Tibial artery (tissue), 4 donors: ENCODE measurements at regions of chr17 and their contacts with region 1.

Region 1: GRCh38 chr17:19648475-19649406 is at the start of gene ALDH3A2:
- DNase-seq: peak; percentile 98 to 99
- H3K4me3 ChIP-seq: peak within 1 kb of the TSS; percentile 69 to 83
- H3K27ac ChIP-seq: peak within 1 kb of the TSS; percentile 90 to 99
- H3K4me1 ChIP-seq: peaks cover 0 to 68% (median 53%) of the 10 kb centered on the region in 4 donors
- H3K27me3 ChIP-seq: no peaks in the 10 kb centered on the region
- CTCF ChIP-seq: peak; percentile 9 to 13

Region 2: GRCh38 chr17:19362277-19363113 is 286.2 kb before region 1 on chr17 and contains the start of gene B9D1:
- intact Hi-C with region 1: no loop called
- DNase-seq: peak; percentile 89 to 97
- H3K4me3 ChIP-seq: peak within 1 kb of the TSS; percentile 64 to 92
- H3K27ac ChIP-seq: peak within 1 kb of the TSS; percentile 85 to 95
- H3K4me1 ChIP-seq: peaks cover 0 to 23% (median 11%) of the 10 kb centered on the region in 4 donors
- H3K27me3 ChIP-seq: no peaks in the 10 kb centered on the region
- CTCF ChIP-seq: peak; percentile 95 to 99

Region 3: DNA sequence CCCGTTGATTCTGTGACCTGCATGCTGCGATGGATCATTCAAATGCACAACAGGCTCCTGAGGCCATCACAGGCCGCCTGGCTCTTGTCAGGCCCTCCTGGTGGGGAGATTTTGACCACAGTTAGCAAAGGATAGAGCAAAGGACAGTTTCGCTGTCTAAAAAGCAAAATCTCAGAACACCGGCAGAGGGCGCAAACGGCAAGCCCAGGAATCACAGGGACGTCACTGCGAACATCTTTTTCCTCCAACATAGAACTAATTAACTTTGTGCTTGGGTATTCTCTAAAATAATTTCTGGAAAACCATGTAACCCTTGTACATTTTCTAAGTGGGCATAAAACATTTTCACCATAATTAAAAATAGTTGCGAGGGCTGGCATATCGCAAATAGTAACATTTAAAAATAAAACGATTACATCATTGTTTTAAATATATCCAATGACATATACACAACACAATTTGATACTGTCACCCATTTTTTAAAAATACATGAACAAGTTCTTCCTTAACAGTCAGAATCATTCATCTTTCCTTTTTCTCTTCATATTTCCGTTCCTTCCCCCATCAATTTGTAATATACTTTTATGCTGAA is 134.7 kb before region 1 on chr17:
- intact Hi-C with region 1: loop called (anchors 5 kb)
- DNase-seq: peak; percentile 62 to 81
- H3K4me3 ChIP-seq: peak overlapping the region in 1 of 2 donors; percentile 30
- H3K27ac ChIP-seq: peak overlapping the region; percentile 69 to 77
- H3K4me1 ChIP-seq: peaks cover 0 to 17% (median 9%) of the 10 kb centered on the region in 4 donors
- H3K27me3 ChIP-seq: no peaks in the 10 kb centered on the region
- CTCF ChIP-seq: peak; percentile 93 to 95

Region 4: GRCh38 chr17:19579867-19580565 is 68.7 kb before region 1 on chr17:
- intact Hi-C with region 1: loop called (anchors 10 kb)
- DNase-seq: no peak
- H3K4me3 ChIP-seq: peak overlapping the region; percentile 45 to 60
- H3K27ac ChIP-seq: peak overlapping the region; percentile 49 to 58
- H3K4me1 ChIP-seq: peaks cover 0 to 19% (median 10%) of the 10 kb centered on the region in 4 donors
- H3K27me3 ChIP-seq: no peaks in the 10 kb centered on the region
- CTCF ChIP-seq: no peak

Region 5: DNA sequence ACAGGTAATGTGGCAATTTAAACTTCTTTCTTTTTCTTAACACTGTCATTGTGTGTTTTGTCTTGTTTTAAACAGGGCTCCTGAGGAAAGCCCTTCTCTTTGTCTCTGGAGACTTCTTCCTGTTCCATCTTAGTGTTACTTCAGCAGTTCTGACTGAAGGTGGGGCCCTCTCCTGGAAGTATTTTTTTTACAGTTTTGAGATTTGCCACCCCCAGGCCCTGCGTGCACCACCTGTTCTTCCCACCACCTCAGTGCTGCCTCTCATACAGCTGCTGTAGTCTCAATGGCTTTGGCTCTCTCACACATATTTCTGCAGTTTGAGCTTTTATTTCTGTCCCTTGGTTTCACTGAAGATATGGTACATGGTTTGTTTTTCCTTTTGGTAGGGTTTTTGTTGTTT is 151.8 kb after region 1 on chr17:
- intact Hi-C with region 1: no loop called
- DNase-seq: no peak
- H3K4me3 ChIP-seq: no peak overlapping the region
- H3K27ac ChIP-seq: no peak overlapping the region
- H3K4me1 ChIP-seq: peaks cover 0 to 12% (median 3%) of the 10 kb centered on the region in 4 donors
- H3K27me3 ChIP-seq: no peaks in the 10 kb centered on the region
- CTCF ChIP-seq: no peak